ENCODE measurements at regions of chr20 and their contacts with region 1.

Region 1: GRCh38 chr20:39429716-39430115 is 467.6 kb downstream of the DHX35 start:
- H3K4me3 ChIP-seq: no peak overlapping the region
- H3K27ac ChIP-seq: no peak overlapping the region
- H3K4me1 ChIP-seq: no peaks in the 10 kb centered on the region
- CTCF ChIP-seq: no peak

Region 2: GRCh38 chr20:39124064-39124463 is 305.7 kb before region 1 on chr20:
- CTCF ChIA-PET with region 1: no interaction called
- POLR2A ChIA-PET with region 1: no interaction called
- H3K4me3 ChIP-seq: no peak overlapping the region
- H3K27ac ChIP-seq: no peak overlapping the region
- H3K4me1 ChIP-seq: no peaks in the 10 kb centered on the region
- CTCF ChIP-seq: no peak

Region 3: GRCh38 chr20:39268981-39269461 is 160.7 kb before region 1 on chr20:
- CTCF ChIA-PET with region 1: interaction called, 25 read pairs
- POLR2A ChIA-PET with region 1: no interaction called
- H3K4me3 ChIP-seq: no peak overlapping the region
- H3K27ac ChIP-seq: no peak overlapping the region
- H3K4me1 ChIP-seq: no peaks in the 10 kb centered on the region
- CTCF ChIP-seq: peak; percentile 87

Region 4: DNA sequence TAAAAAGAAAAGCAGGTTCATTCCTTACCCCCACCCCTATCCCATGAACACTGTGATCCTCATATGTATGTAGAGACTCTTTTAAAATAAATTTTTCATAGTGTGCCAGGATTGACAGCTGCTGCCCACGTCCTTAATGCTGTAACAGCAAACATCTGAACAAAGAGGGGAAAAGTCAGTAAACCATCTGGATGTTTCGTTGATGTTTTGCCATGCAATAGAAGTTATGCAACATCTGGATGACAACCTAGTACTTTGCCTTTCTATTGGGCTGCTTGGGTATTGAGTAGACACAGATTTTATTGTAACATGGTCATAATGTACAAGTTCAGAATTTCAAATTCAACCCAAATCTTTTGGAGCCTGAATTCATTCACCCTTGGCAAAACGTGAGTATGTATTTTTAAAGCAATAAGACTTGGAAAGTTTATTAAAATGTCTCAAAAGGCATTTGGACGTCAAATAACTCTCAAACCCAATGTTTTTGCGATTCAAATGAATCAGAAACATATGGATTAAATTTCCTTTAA is 32.8 kb after region 1 on chr20:
- CTCF ChIA-PET with region 1: no interaction called
- POLR2A ChIA-PET with region 1: no interaction called
- H3K4me3 ChIP-seq: no peak overlapping the region
- H3K27ac ChIP-seq: no peak overlapping the region
- H3K4me1 ChIP-seq: no peaks in the 10 kb centered on the region
- CTCF ChIP-seq: no peak

Measured in HEK293 (cell line).